ENCODE measurements at regions of chrX and their contacts with region 1.

Region 1: GRCh38 chrX:130060122-130061069 is 49.9 kb downstream of the ELF4 start:
- DNase-seq: peak; percentile 85
- ATAC-seq: peak; percentile 89
- H3K4me3 Mint-ChIP-seq: peak overlapping the region; percentile 85
- H3K27ac Mint-ChIP-seq: peak overlapping the region; percentile 87
- H3K4me1 Mint-ChIP-seq: peaks cover 3% of the 10 kb centered on the region
- H3K27me3 Mint-ChIP-seq: no peaks in the 10 kb centered on the region
- CTCF ChIP-seq: no peak

Region 2: GRCh38 chrX:129600981-129601424 is 459.4 kb before region 1 on chrX:
- CTCF ChIA-PET with region 1: interaction called, 9 read pairs
- POLR2A ChIA-PET with region 1: interaction called, 3 read pairs
- intact Hi-C with region 1: loop called (anchors 1 kb)
- DNase-seq: no peak
- ATAC-seq: no peak
- H3K4me3 Mint-ChIP-seq: no peak overlapping the region
- H3K27ac Mint-ChIP-seq: no peak overlapping the region
- H3K4me1 Mint-ChIP-seq: peaks cover 17% of the 10 kb centered on the region
- H3K27me3 Mint-ChIP-seq: no peaks in the 10 kb centered on the region
- CTCF ChIP-seq: no peak

Region 3: GRCh38 chrX:129606918-129607317 is 453.5 kb before region 1 on chrX:
- CTCF ChIA-PET with region 1: interaction called, 9 read pairs
- POLR2A ChIA-PET with region 1: interaction called, 3 read pairs
- intact Hi-C with region 1: loop called (anchors 1 kb)
- DNase-seq: no peak
- ATAC-seq: peak; percentile 61
- H3K4me3 Mint-ChIP-seq: no peak overlapping the region
- H3K27ac Mint-ChIP-seq: no peak overlapping the region
- H3K4me1 Mint-ChIP-seq: peaks cover 19% of the 10 kb centered on the region
- H3K27me3 Mint-ChIP-seq: no peaks in the 10 kb centered on the region
- CTCF ChIP-seq: no peak

Region 4: DNA sequence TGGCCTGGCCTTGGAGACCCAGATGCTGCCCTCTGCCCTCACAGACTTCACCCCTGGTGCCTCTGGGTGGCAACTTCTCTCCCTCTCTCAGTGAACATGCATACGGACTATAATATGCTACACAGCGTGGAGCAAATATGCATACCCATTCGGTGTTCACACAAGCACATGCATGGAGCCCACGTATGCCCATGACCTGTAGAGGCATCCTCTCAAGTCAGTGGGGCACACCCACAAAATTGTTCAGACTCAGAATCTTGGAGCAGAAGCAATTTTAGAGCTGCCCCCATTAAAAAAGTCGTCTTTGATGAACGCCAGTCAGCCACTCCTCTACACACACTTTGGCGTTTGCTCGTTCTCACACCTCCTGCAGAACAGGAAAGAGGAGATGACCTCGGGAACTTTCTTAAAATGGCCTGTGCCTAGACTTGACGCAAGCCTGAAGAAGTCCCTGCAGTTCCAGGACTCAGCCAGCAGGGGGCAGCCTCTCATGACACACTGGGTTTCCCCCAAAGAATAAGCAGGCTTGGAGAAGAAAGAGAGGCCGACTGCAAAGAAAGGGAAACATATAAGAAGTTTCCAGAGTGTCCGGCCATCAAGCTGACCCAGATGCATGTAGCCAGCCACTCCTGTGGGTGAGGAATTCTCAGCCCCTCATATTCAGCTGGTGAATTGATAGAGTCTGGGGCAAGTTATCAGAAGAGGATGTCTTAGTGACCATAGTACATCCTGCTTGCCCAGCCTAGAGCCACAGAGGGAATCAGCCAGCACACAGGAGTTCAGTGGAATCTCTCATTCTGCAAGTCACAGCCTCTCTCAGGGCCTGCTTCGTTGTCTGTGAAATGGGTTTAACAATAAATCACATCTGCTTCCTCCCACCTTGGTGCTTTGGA is 422.9 kb before region 1 on chrX:
- CTCF ChIA-PET with region 1: interaction called, 3 read pairs
- POLR2A ChIA-PET with region 1: no interaction called
- intact Hi-C with region 1: loop called (anchors 1 kb)
- DNase-seq: peak; percentile 58
- ATAC-seq: peak; percentile 67
- H3K4me3 Mint-ChIP-seq: no peak overlapping the region
- H3K27ac Mint-ChIP-seq: no peak overlapping the region
- H3K4me1 Mint-ChIP-seq: no peaks in the 10 kb centered on the region
- H3K27me3 Mint-ChIP-seq: no peaks in the 10 kb centered on the region
- CTCF ChIP-seq: no peak

Region 5: DNA sequence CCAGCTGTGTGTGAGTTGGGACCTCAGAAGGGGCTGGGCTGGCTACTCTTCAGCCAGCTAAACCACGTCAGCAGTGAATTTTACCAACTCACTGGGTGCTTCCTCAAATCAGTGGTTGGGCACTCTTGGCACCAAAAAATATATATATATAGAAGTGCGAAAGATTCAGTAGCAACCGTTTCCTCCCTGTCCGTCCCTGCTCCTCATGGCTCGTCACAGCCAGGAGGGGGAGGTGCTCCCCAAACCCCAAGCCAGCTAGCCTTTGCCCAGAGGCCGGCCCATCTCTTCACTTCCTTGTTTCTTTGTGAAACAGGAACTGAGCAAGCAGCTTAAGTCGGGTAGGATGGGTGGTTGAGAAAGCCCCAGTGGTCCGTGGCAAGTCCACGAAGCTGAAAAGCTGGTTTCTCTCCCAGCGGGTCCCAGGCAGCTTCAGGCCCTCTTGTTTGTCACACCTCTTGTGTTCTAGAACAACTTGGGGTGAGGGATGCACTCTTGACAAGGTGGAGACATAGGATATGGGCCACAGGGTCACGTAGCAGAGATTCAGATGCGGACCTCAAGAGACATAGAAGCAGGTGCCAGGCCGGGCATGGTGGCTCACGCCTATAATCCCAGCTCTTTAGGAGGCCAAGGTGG is 287.5 kb before region 1 on chrX:
- CTCF ChIA-PET with region 1: no interaction called
- POLR2A ChIA-PET with region 1: no interaction called
- intact Hi-C with region 1: no loop called
- DNase-seq: peak; percentile 59
- ATAC-seq: peak; percentile 76
- H3K4me3 Mint-ChIP-seq: peak overlapping the region; percentile 62
- H3K27ac Mint-ChIP-seq: peak overlapping the region; percentile 97
- H3K4me1 Mint-ChIP-seq: peaks cover 84% of the 10 kb centered on the region
- H3K27me3 Mint-ChIP-seq: no peaks in the 10 kb centered on the region
- CTCF ChIP-seq: no peak

Region 6: GRCh38 chrX:129925305-129926092 is 134.9 kb before region 1 on chrX:
- CTCF ChIA-PET with region 1: interaction called, 26 read pairs
- POLR2A ChIA-PET with region 1: interaction called, 6 read pairs
- intact Hi-C with region 1: loop called (anchors 1 kb)
- DNase-seq: peak; percentile 30
- ATAC-seq: peak; percentile 84
- H3K4me3 Mint-ChIP-seq: no peak overlapping the region
- H3K27ac Mint-ChIP-seq: no peak overlapping the region
- H3K4me1 Mint-ChIP-seq: peaks cover 4% of the 10 kb centered on the region
- H3K27me3 Mint-ChIP-seq: no peaks in the 10 kb centered on the region
- CTCF ChIP-seq: no peak

Region 7: GRCh38 chrX:130018143-130018542 is 42.3 kb before region 1 on chrX:
- CTCF ChIA-PET with region 1: no interaction called
- POLR2A ChIA-PET with region 1: no interaction called
- intact Hi-C with region 1: no loop called
- DNase-seq: no peak
- ATAC-seq: no peak
- H3K4me3 Mint-ChIP-seq: no peak overlapping the region
- H3K27ac Mint-ChIP-seq: no peak overlapping the region
- H3K4me1 Mint-ChIP-seq: no peaks in the 10 kb centered on the region
- H3K27me3 Mint-ChIP-seq: no peaks in the 10 kb centered on the region
- CTCF ChIP-seq: no peak

Region 8: DNA sequence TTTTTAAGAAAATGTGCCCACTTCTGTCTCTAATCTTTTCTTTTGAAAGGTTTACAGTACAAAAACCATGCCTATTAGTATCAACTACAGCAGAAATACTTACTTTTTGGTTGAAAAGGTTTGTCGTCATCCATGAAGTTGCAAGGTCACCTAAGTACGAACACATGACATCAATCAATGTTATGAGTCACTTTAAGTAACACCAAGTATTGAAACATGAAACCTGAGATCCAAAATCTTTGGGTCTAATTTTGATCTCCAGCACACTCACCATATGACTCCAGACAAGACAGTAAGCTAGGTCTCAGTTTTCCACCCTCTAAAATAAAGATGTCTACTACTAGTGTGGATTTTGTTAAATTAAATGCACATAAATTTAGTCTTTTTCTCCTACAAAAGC is 199.9 kb after region 1 on chrX:
- CTCF ChIA-PET with region 1: no interaction called
- POLR2A ChIA-PET with region 1: no interaction called
- intact Hi-C with region 1: no loop called
- DNase-seq: no peak
- ATAC-seq: no peak
- H3K4me3 Mint-ChIP-seq: no peak overlapping the region
- H3K27ac Mint-ChIP-seq: no peak overlapping the region
- H3K4me1 Mint-ChIP-seq: no peaks in the 10 kb centered on the region
- H3K27me3 Mint-ChIP-seq: no peaks in the 10 kb centered on the region
- CTCF ChIP-seq: no peak

Measured in activated B cell treated with CpG ODN at 0.5 μM for 24 hours (primary cell).